GM12878 (cell line): ENCODE measurements at regions of chr1 and their contacts with region 1.

Region 1: GRCh38 chr1:8671306-8671917 is 146.0 kb downstream of the RERE start:
- DNase-seq: no peak
- ATAC-seq: 0 out of 3 replicates have a peak, but pooled peaks have one; percentile 24
- H3K4me3 ChIP-seq: no peak overlapping the region
- H3K27ac ChIP-seq: no peak overlapping the region
- H3K4me1 ChIP-seq: peaks cover 31% of the 10 kb centered on the region
- H3K27me3 ChIP-seq: no peaks in the 10 kb centered on the region
- CTCF ChIP-seq: peak; percentile 76 to 80 (median 79)
- EP300 ChIP-seq: no peak
- POLR2A ChIP-seq: no peak
- RAD21 ChIP-seq: peak; percentile 94

Region 2: DNA sequence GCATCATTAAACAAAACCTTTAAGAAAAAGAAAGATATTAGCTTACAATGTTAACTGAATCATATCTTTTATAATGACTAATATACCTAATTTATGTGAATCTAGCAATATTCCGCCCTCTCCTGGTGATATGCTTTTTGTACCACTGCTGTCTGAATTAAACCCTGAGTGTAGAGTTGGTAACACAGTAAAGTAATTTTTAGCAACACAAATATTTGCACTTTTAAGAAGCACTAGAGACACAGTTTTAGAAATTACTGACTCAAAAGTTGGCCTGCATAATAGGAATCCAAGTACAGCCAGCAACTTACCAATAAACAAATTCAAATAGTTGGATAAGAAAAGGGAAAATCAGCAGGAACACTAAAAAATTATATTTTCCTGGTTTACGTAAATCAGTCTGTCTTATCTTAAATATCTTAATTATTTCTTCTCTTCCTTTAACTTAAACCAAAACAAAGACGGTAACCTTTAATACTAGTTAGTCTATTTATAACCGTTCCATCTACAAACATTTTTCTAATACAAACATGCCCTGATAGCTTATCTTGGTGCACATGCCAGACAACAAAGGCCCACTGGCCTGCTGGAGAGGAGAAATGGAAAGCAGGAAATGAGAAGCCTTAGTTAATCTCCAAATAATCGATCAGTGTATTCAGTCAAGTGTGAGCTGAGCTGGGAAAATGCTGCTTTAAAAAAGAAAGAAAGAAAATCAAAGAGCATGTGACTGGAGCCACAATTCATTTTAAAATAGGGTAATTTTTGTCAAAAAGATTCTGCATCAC is 100.0 kb before region 1 on chr1:
- CTCF ChIA-PET with region 1: interaction called, 10 read pairs
- POLR2A ChIA-PET with region 1: no interaction called
- RAD21 ChIA-PET with region 1: interaction called, 17 read pairs
- SMC1A ChIA-PET with region 1: interaction called, 23 read pairs
- in situ Hi-C with region 1: no loop called
- intact Hi-C with region 1: no loop called
- DNase-seq: no peak
- ATAC-seq: 0 out of 3 replicates have a peak, but pooled peaks have one; percentile 36
- H3K4me3 ChIP-seq: no peak overlapping the region
- H3K27ac ChIP-seq: no peak overlapping the region
- H3K4me1 ChIP-seq: no peaks in the 10 kb centered on the region
- H3K27me3 ChIP-seq: no peaks in the 10 kb centered on the region
- CTCF ChIP-seq: peak in 2 of 3 experiments; percentile 10 to 16; a peak in 1 of 6 replicates
- EP300 ChIP-seq: no peak
- POLR2A ChIP-seq: no peak
- RAD21 ChIP-seq: 0 out of 2 replicates have a peak, but pooled peaks have one; percentile 10

Region 3: DNA sequence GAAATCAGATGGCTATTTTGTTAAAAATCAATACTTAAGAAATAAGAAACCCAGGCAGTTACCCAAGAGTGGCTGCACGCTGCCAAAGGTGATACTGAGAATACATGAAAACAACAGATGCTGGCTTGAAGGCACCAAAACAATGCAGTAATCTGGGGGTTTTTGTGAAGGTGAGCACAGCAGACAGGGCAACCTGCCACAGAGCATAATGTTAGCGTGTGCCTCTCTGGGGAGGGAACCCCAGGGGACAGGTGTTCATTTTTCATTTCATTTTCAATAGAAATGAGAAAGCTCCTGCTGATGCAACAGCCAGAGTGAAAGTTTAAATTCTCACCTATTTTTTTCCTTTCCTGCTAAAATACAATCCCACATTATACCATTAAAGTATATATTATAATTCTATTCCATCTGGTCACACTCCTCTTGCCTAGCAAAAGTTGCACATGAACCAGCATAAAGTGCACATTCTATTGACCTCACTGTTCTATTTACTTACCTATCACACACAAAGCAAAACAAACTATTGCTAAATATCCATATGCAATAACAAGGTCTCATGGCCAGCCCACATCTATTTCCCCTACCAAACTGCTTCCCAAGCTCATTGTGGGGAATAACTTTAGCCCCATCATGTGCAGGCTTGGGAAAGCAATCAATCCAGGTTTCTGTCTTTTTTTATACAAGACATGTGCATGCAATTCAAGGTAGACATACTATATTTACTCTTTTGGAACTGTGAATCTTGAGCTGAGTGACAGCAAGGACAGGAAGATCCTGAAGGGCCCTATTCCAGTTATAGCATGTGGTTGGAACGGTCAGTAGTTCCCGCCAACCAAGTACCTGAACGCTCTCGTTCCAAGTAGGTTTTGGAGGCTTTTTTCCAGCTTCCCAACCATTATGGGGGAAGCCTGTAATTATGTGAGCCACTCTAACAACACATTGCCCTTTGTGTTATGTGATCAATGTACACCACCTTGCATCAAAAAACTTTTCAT is 27.6 kb before region 1 on chr1:
- CTCF ChIA-PET with region 1: interaction called, 20 read pairs
- POLR2A ChIA-PET with region 1: interaction called, 12 read pairs
- RAD21 ChIA-PET with region 1: interaction called, 384 read pairs
- SMC1A ChIA-PET with region 1: interaction called, 587 read pairs
- in situ Hi-C with region 1: no loop called
- intact Hi-C with region 1: no loop called
- DNase-seq: peak; percentile 94
- ATAC-seq: peak; percentile 95
- H3K4me3 ChIP-seq: no peak overlapping the region
- H3K27ac ChIP-seq: peak overlapping the region; percentile 75
- H3K4me1 ChIP-seq: peaks cover 43% of the 10 kb centered on the region
- H3K27me3 ChIP-seq: no peaks in the 10 kb centered on the region
- CTCF ChIP-seq: no peak
- EP300 ChIP-seq: peak; percentile 52 to 61; a peak in 1 of 4 replicates
- POLR2A ChIP-seq: no peak
- RAD21 ChIP-seq: 0 out of 2 replicates have a peak, but pooled peaks have one; percentile 27

Region 4: GRCh38 chr1:8687039-8687438 is 15.6 kb after region 1 on chr1:
- CTCF ChIA-PET with region 1: interaction called, 89 read pairs
- POLR2A ChIA-PET with region 1: interaction called, 10 read pairs
- RAD21 ChIA-PET with region 1: interaction called, 10 read pairs
- SMC1A ChIA-PET with region 1: interaction called, 99 read pairs
- in situ Hi-C with region 1: no loop called
- intact Hi-C with region 1: no loop called
- DNase-seq: no peak
- ATAC-seq: peak; percentile 72
- H3K4me3 ChIP-seq: no peak overlapping the region
- H3K27ac ChIP-seq: peak overlapping the region; percentile 5; the same call in 1 of the 2 replicates
- H3K4me1 ChIP-seq: peaks cover 23% of the 10 kb centered on the region
- H3K27me3 ChIP-seq: no peaks in the 10 kb centered on the region
- CTCF ChIP-seq: no peak
- EP300 ChIP-seq: no peak
- POLR2A ChIP-seq: no peak
- RAD21 ChIP-seq: no peak

Region 5: GRCh38 chr1:8718850-8719361 is 47.5 kb after region 1 on chr1:
- CTCF ChIA-PET with region 1: interaction called, 74 read pairs
- POLR2A ChIA-PET with region 1: no interaction called
- RAD21 ChIA-PET with region 1: interaction called, 6 read pairs
- SMC1A ChIA-PET with region 1: interaction called, 123 read pairs
- in situ Hi-C with region 1: no loop called
- intact Hi-C with region 1: loop called (anchors 2 kb)
- DNase-seq: no peak
- ATAC-seq: peak; percentile 58
- H3K4me3 ChIP-seq: no peak overlapping the region
- H3K27ac ChIP-seq: no peak overlapping the region
- H3K4me1 ChIP-seq: peaks cover 23% of the 10 kb centered on the region
- H3K27me3 ChIP-seq: no peaks in the 10 kb centered on the region
- CTCF ChIP-seq: peak; percentile 15 to 40 (median 22); a peak in 4 of 6 replicates
- EP300 ChIP-seq: no peak
- POLR2A ChIP-seq: no peak
- RAD21 ChIP-seq: peak; percentile 23; the same call in 1 of the 2 replicates

Region 6: DNA sequence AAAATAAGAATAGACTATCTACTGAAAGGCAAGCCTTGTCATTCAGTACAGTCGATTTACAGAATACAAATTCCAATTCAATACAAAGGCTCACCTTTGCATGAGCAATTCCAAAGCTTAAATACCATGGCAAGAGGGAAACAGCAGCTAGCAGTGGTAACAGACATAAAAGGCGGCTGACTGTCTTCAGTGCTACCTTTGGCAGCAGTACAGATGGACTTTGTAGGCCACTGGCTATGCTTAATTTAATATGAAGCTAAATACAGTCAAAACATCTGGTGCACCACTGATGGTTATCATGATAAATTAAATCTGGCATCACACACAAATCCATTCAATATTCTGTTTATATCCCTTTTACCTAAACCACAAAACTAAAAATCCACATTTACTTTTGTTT is 83.6 kb after region 1 on chr1:
- CTCF ChIA-PET with region 1: no interaction called
- POLR2A ChIA-PET with region 1: no interaction called
- RAD21 ChIA-PET with region 1: no interaction called
- SMC1A ChIA-PET with region 1: no interaction called
- in situ Hi-C with region 1: no loop called
- intact Hi-C with region 1: no loop called
- DNase-seq: no peak
- ATAC-seq: no peak
- H3K4me3 ChIP-seq: no peak overlapping the region
- H3K27ac ChIP-seq: no peak overlapping the region
- H3K4me1 ChIP-seq: no peaks in the 10 kb centered on the region; the same call in 1 of the 2 replicates
- H3K27me3 ChIP-seq: no peaks in the 10 kb centered on the region
- CTCF ChIP-seq: no peak
- EP300 ChIP-seq: no peak
- POLR2A ChIP-seq: no peak
- RAD21 ChIP-seq: no peak